Psoas muscle (tissue), 8 donors: ENCODE measurements at regions of chrX and their contacts with region 1.

Region 1: GRCh38 chrX:139126493-139126892 is 404.0 kb upstream of the F9 start:
- DNase-seq: peak; percentile 10 to 46
- ATAC-seq: peak; percentile 86 to 96 (median 93)
- H3K4me3 ChIP-seq: no peak overlapping the region
- H3K27ac ChIP-seq: no peak overlapping the region
- H3K4me1 ChIP-seq: peaks cover 3% of the 10 kb centered on the region
- H3K27me3 ChIP-seq: no peaks in the 10 kb centered on the region
- CTCF ChIP-seq: peak; percentile 60

Region 2: DNA sequence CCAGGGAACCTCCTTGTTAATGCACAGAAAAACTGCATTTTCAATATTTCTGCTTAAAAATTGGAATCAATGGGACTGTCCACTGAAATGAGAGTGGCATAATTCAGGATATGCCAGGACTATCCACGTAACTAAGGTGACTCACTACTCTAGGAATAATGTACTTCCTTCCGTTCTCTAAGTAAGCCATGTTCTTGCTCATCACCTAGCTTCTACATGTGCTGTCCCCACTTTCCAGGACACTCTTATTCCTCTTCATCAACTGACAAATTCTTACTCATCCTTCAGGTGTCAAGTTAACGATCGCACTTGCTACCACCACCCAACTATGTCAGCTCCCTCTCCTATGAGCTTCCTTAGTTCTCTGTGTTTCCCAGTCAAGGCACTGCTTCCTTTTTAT is 61.2 kb after region 1 on chrX:
- intact Hi-C with region 1: loop called in 1 of 2 experiments (anchors 10 kb)
- DNase-seq: no peak
- ATAC-seq: peak; percentile 60 to 82 (median 76)
- H3K4me3 ChIP-seq: no peak overlapping the region
- H3K27ac ChIP-seq: no peak overlapping the region
- H3K4me1 ChIP-seq: peaks cover 3% of the 10 kb centered on the region
- H3K27me3 ChIP-seq: no peaks in the 10 kb centered on the region
- CTCF ChIP-seq: no peak

Region 3: GRCh38 chrX:139423186-139423585 is 296.7 kb after region 1 on chrX:
- intact Hi-C with region 1: loop called in 1 of 2 experiments (anchors 2 kb)
- DNase-seq: no peak
- ATAC-seq: no peak
- H3K4me3 ChIP-seq: no peak overlapping the region
- H3K27ac ChIP-seq: no peak overlapping the region
- H3K4me1 ChIP-seq: no peaks in the 10 kb centered on the region
- H3K27me3 ChIP-seq: no peaks in the 10 kb centered on the region
- CTCF ChIP-seq: no peak